CD4-positive, alpha-beta memory T cell (primary cell): ENCODE measurements at regions of chr1 and their contacts with region 1.

Region 1: DNA sequence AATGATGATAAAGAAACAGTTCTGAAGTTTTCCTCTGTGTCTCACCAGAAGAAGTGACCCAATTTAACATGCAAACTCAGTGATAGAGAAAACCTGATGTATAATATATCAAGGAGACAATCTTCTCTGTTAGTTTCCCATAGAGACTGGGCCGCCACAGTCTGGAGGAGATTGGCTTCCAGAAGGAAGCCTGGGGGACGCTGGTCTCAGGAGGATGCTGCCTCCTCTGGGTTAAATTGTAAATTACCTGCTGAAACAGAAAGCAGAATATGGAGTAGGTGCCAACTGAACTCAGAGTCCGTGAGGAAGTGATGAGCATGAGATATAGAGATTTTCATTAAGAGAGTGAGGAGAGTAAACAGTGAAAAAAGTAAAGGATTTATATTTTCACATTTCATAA is 15.8 kb downstream of the OR14I1 start:
- DNase-seq: peak in 4 of 5 donors; percentile 19 to 41 (median 21)
- H3K4me3 ChIP-seq: no peak overlapping the region
- H3K4me3 Mint-ChIP-seq: no peak overlapping the region
- H3K27ac ChIP-seq: no peak overlapping the region
- H3K27ac Mint-ChIP-seq: peak overlapping the region in 1 of 7 donors; percentile 32
- H3K4me1 ChIP-seq: no peaks in the 10 kb centered on the region
- H3K4me1 Mint-ChIP-seq: peaks cover 0 to 4% (median 3%) of the 10 kb centered on the region in 4 donors
- H3K27me3 ChIP-seq: no peaks in the 10 kb centered on the region
- H3K27me3 Mint-ChIP-seq: peaks cover 4 to 6% of the 10 kb centered on the region in 2 donors

Region 2: GRCh38 chr1:248243204-248243603 is 443.6 kb before region 1 on chr1:
- CTCF ChIA-PET with region 1: no interaction called
- POLR2A ChIA-PET with region 1: no interaction called
- intact Hi-C with region 1: loop called (anchors 1 kb)
- DNase-seq: peak in 4 of 5 donors; percentile 14 to 32 (median 26)
- H3K4me3 ChIP-seq: no peak overlapping the region
- H3K4me3 Mint-ChIP-seq: peak overlapping the region in 4 of 8 donors; percentile 1 to 62 (median 44)
- H3K27ac ChIP-seq: no peak overlapping the region
- H3K27ac Mint-ChIP-seq: peak overlapping the region in 1 of 7 donors; percentile 7
- H3K4me1 ChIP-seq: peaks cover 3% of the 10 kb centered on the region
- H3K4me1 Mint-ChIP-seq: peaks cover 0 to 2% (median under 1%) of the 10 kb centered on the region in 4 donors
- H3K27me3 ChIP-seq: no peaks in the 10 kb centered on the region
- H3K27me3 Mint-ChIP-seq: peaks cover 3 to 11% of the 10 kb centered on the region in 2 donors

Region 3: GRCh38 chr1:248404024-248404423 is 282.8 kb before region 1 on chr1:
- CTCF ChIA-PET with region 1: interaction called, 13 read pairs
- POLR2A ChIA-PET with region 1: no interaction called
- intact Hi-C with region 1: loop called (anchors 1 kb)
- DNase-seq: peak in 3 of 5 donors; percentile 3 to 21 (median 9)
- H3K4me3 ChIP-seq: no peak overlapping the region
- H3K4me3 Mint-ChIP-seq: no peak overlapping the region
- H3K27ac ChIP-seq: no peak overlapping the region
- H3K27ac Mint-ChIP-seq: peak overlapping the region in 2 of 7 donors; percentile 0 to 1
- H3K4me1 ChIP-seq: no peaks in the 10 kb centered on the region
- H3K4me1 Mint-ChIP-seq: no peaks in the 10 kb centered on the region
- H3K27me3 ChIP-seq: no peaks in the 10 kb centered on the region
- H3K27me3 Mint-ChIP-seq: no peaks in the 10 kb centered on the region

Region 4: DNA sequence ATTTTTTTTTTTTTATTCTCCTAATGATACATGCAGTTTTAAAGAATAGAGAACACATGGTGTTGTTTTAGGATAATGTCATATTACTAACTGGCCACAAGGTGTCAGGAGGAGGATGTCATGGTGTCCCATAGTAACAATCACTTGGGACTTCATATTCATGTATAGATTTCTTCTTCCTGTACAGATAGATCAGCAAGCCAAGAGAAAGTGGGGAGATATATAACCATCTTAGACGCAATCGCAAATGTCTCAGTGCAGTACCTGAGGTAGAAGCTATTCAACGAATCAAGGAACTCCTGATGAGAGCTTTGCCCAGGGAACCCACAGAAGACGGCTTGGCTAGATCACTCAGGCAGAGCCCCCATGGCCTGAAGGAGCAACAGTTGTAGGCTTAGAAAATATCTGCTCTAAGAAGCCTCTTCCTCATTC is 64.2 kb before region 1 on chr1:
- CTCF ChIA-PET with region 1: no interaction called
- POLR2A ChIA-PET with region 1: no interaction called
- intact Hi-C with region 1: loop called (anchors 1 kb)
- DNase-seq: peak in 4 of 5 donors; percentile 3 to 26 (median 16)
- H3K4me3 ChIP-seq: no peak overlapping the region
- H3K4me3 Mint-ChIP-seq: no peak overlapping the region
- H3K27ac ChIP-seq: no peak overlapping the region
- H3K27ac Mint-ChIP-seq: no peak overlapping the region
- H3K4me1 ChIP-seq: no peaks in the 10 kb centered on the region
- H3K4me1 Mint-ChIP-seq: peaks cover 0 to 7% (median 3%) of the 10 kb centered on the region in 4 donors
- H3K27me3 ChIP-seq: no peaks in the 10 kb centered on the region
- H3K27me3 Mint-ChIP-seq: no peaks in the 10 kb centered on the region

Region 5: DNA sequence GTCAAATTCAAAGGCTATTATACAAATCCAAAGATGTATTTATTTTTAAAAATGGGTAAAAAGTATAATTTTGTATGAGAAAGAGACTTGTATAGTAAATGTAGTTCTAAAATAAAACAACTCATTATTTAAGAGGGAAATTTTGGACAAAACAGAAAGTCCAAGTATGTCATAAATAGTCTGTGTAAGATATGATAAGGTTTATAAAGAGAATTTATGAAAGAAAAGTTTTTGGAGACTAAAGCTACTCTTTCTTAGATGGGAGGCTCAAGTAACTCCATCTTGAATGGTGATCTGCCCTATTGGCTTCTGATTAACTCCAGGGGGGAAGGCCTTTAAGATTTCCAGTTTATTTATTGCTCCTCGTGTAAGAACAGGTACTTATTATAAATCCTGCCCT is 16.8 kb before region 1 on chr1:
- CTCF ChIA-PET with region 1: no interaction called
- POLR2A ChIA-PET with region 1: no interaction called
- intact Hi-C with region 1: no loop called
- DNase-seq: no peak
- H3K4me3 ChIP-seq: no peak overlapping the region
- H3K4me3 Mint-ChIP-seq: no peak overlapping the region
- H3K27ac ChIP-seq: no peak overlapping the region
- H3K27ac Mint-ChIP-seq: no peak overlapping the region
- H3K4me1 ChIP-seq: no peaks in the 10 kb centered on the region
- H3K4me1 Mint-ChIP-seq: no peaks in the 10 kb centered on the region
- H3K27me3 ChIP-seq: no peaks in the 10 kb centered on the region
- H3K27me3 Mint-ChIP-seq: no peaks in the 10 kb centered on the region